ENCODE measurements at regions of chr1 and their contacts with region 1.

Region 1: GRCh38 chr1:48697066-48697707 is 79.5 kb downstream of the BEND5 start:
- DNase-seq: peak; percentile 73
- H3K4me3 Mint-ChIP-seq: no peak overlapping the region
- H3K27ac Mint-ChIP-seq: no peak overlapping the region
- H3K4me1 Mint-ChIP-seq: peaks cover 47% of the 10 kb centered on the region
- H3K27me3 Mint-ChIP-seq: no peaks in the 10 kb centered on the region
- CTCF ChIP-seq: peak; percentile 89

Region 2: DNA sequence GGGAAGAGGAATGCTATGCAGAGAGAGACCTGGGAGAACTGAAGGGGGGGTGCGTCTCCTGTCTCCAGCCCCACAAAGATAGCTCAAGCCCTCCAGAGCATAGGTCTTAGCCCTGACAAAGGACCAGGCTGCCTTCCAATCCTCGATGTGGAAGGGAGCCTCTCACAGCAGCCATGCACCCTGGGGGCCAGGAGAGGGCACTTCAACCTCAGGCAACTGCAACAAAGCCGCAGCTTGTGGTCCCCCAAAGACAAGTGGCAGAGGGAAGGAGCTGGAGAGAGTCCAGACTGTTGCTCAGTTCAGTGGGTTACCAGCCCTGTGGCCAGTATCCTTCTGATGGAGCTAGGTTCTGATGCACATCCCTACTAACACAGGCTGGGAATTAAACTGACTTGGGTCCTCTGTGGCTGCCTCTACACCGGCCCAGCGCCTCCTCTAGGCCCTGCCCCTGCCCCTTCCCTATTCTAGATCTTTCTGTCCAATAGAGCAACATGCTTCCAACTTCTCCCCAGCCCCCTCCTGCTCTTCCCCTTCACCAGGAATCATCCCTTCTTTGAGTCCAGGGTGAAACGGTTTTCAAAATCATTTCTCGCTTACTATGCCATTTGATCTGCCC is 124.4 kb before region 1 on chr1:
- CTCF ChIA-PET with region 1: interaction called, 3 read pairs
- intact Hi-C with region 1: loop called (anchors 5 kb)
- DNase-seq: peak; percentile 62
- H3K4me3 Mint-ChIP-seq: no peak overlapping the region
- H3K27ac Mint-ChIP-seq: no peak overlapping the region
- H3K4me1 Mint-ChIP-seq: no peaks in the 10 kb centered on the region
- H3K27me3 Mint-ChIP-seq: peaks cover 71% of the 10 kb centered on the region
- CTCF ChIP-seq: peak; percentile 70

Region 3: GRCh38 chr1:48654606-48655210 is 42.5 kb before region 1 on chr1:
- CTCF ChIA-PET with region 1: no interaction called
- intact Hi-C with region 1: no loop called
- DNase-seq: no peak
- H3K4me3 Mint-ChIP-seq: no peak overlapping the region
- H3K27ac Mint-ChIP-seq: no peak overlapping the region
- H3K4me1 Mint-ChIP-seq: no peaks in the 10 kb centered on the region
- H3K27me3 Mint-ChIP-seq: peaks cover 57% of the 10 kb centered on the region
- CTCF ChIP-seq: no peak

Region 4: DNA sequence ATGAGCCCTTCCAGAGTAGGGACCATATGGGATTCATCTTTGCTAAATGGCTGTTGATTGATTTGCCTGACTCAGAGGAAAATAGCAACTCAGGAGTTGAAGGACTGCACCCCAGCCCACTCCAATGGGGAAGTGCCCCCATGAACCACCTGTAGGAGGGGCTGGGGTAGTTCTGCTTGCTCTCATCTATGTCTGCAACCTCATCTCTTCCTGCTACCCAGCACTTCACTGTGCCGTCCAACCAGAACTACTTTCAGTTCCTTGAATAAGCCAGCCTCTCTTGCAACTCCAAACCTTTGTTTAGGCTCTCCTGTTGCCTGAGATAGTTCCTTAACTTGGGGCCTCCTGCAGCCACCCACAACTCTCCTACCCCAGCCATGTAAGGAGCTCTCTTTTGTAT is 52.9 kb after region 1 on chr1:
- CTCF ChIA-PET with region 1: no interaction called
- intact Hi-C with region 1: no loop called
- DNase-seq: no peak
- H3K4me3 Mint-ChIP-seq: no peak overlapping the region
- H3K27ac Mint-ChIP-seq: no peak overlapping the region
- H3K4me1 Mint-ChIP-seq: no peaks in the 10 kb centered on the region
- H3K27me3 Mint-ChIP-seq: peaks cover 49% of the 10 kb centered on the region
- CTCF ChIP-seq: no peak